Heart right ventricle (tissue), 16 donors: ENCODE measurements at regions of chr16 and their contacts with region 1.

Region 1: GRCh38 chr16:52436339-52437276 is 110.3 kb downstream of the TOX3 start:
- DNase-seq: no peak
- ATAC-seq: no peak
- H3K4me3 ChIP-seq: no peak overlapping the region
- H3K27ac ChIP-seq: no peak overlapping the region
- H3K4me1 ChIP-seq: no peaks in the 10 kb centered on the region
- H3K27me3 ChIP-seq: peaks cover 0 to 5% (median 0%) of the 10 kb centered on the region in 7 donors
- CTCF ChIP-seq: no peak

Region 2: DNA sequence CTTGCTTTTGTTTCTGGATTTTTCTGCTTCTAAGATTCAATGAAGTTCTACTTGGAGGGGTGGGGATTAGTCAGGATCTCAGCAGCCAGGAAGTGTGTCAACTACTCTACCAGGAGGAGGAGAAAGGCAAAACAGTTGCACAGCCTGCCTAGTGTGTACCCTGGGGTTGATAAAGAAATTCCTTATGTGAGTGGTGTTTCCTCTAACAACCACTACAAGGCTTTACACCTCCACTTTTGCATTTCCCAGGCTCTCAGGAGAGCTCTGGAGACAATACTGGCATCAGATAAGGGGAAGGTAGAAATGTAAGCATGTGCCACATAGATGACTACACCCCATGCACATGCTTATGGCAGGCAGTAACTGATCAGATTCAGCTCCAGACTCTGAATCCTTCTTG is 64.3 kb before region 1 on chr16:
- intact Hi-C with region 1: no loop called
- DNase-seq: no peak
- ATAC-seq: no peak
- H3K4me3 ChIP-seq: no peak overlapping the region
- H3K27ac ChIP-seq: no peak overlapping the region
- H3K4me1 ChIP-seq: no peaks in the 10 kb centered on the region
- H3K27me3 ChIP-seq: no peaks in the 10 kb centered on the region
- CTCF ChIP-seq: no peak

Region 3: DNA sequence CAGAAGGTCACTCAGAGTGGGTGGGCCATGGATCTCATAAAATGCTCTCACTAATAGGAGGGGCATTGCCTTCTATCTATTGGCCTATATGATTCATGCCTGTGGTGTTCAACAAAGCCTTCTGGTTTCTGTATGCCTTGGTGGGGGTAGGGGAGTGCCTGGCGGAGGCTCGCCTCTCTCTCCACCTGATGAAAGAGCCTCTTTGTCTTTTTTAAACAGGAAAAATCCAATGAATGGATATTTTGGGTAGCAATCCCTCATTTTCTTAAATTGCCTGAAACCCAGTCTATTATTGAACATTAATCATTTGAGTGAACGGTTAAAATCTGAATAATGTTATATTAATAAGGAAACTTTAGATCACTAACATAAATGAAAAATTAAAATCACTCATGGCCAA is 19.8 kb after region 1 on chr16:
- intact Hi-C with region 1: loop called in 1 of 10 experiments (anchors 1 kb)
- DNase-seq: no peak
- ATAC-seq: no peak
- H3K4me3 ChIP-seq: no peak overlapping the region
- H3K27ac ChIP-seq: no peak overlapping the region
- H3K4me1 ChIP-seq: no peaks in the 10 kb centered on the region
- H3K27me3 ChIP-seq: no peaks in the 10 kb centered on the region
- CTCF ChIP-seq: no peak